Esophagus muscularis mucosa (tissue), 4 donors: ENCODE measurements at regions of chr9 and their contacts with region 1.

Region 1: DNA sequence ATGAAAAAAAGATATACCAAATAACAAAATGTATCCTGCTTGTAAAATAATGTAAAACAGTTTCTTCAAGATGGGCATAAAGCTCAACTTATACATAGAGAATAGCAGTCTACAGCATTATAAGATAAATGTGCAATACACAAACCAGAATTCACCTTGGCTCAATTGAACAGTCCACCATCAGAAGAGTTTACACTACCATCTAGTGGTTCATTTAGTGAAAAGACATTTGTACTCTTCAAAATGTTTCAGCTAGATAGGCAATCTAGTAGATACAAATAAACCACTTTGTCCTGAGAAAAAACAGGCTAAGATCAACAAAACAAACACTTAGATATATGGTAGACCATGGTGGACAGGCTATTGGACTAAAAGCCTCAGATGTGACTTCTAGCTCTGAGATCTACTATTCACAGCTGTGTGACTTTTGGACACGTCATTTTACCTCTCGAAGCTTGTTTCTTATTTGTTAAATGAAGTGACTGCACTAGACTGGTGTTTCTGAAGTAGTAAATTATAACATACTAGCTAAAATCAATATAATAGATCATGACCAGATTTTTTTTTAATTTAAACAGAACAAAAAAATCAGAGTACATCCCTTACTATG is 22.1 kb upstream of the TPD52L3 start:
- DNase-seq: no peak
- H3K4me3 ChIP-seq: no peak overlapping the region
- H3K27ac ChIP-seq: no peak overlapping the region
- H3K4me1 ChIP-seq: no peaks in the 10 kb centered on the region
- H3K27me3 ChIP-seq: peaks cover 0 to 4% (median 0%) of the 10 kb centered on the region in 4 donors
- CTCF ChIP-seq: peak; percentile 57 to 64 (median 61)
- EP300 ChIP-seq: no peak
- POLR2A ChIP-seq: no peak

Region 2: GRCh38 chr9:5920860-5921328 is 385.2 kb before region 1 on chr9:
- intact Hi-C with region 1: no loop called
- DNase-seq: no peak
- H3K4me3 ChIP-seq: no peak overlapping the region
- H3K27ac ChIP-seq: no peak overlapping the region
- H3K4me1 ChIP-seq: no peaks in the 10 kb centered on the region
- H3K27me3 ChIP-seq: no peaks in the 10 kb centered on the region
- CTCF ChIP-seq: no peak
- EP300 ChIP-seq: no peak
- POLR2A ChIP-seq: no peak

Region 3: GRCh38 chr9:6055213-6055612 is 250.8 kb before region 1 on chr9:
- intact Hi-C with region 1: loop called (anchors 5 kb)
- DNase-seq: no peak
- H3K4me3 ChIP-seq: no peak overlapping the region
- H3K27ac ChIP-seq: no peak overlapping the region
- H3K4me1 ChIP-seq: no peaks in the 10 kb centered on the region
- H3K27me3 ChIP-seq: no peaks in the 10 kb centered on the region
- CTCF ChIP-seq: peak; percentile 43 to 54 (median 50)
- EP300 ChIP-seq: no peak
- POLR2A ChIP-seq: no peak

Region 4: GRCh38 chr9:6197330-6197729 is 108.7 kb before region 1 on chr9:
- intact Hi-C with region 1: loop called (anchors 1 kb)
- DNase-seq: no peak
- H3K4me3 ChIP-seq: no peak overlapping the region
- H3K27ac ChIP-seq: no peak overlapping the region
- H3K4me1 ChIP-seq: peaks cover 5 to 9% (median 6%) of the 10 kb centered on the region in 4 donors
- H3K27me3 ChIP-seq: no peaks in the 10 kb centered on the region
- CTCF ChIP-seq: peak; percentile 61 to 71 (median 64)
- EP300 ChIP-seq: no peak
- POLR2A ChIP-seq: no peak